AG04449 (cell line): ENCODE measurements at regions of chr3 and their contacts with region 1.

Region 1: DNA sequence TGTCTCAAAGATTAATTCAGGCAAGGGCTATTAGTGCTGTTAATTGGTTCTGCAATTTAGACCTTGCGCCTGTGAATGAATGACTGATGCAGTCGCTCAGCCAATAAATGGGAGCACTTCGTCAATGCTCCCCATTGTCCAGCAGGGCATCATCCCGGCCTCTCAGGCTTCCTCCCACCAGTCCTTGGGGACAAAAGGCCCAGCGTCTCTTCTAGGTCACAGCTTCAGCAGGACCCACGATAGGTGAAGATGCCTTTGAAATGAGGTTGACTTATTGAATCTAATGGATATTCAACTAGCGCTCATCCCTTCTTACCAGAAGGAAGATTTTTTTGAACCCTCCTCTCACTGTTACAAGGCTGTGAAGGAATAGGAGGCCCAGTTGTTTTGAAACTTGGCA is 47.7 kb upstream of the CLDN18 start:
- DNase-seq: no peak
- H3K4me3 ChIP-seq: no peak overlapping the region
- CTCF ChIP-seq: no peak

Region 2: DNA sequence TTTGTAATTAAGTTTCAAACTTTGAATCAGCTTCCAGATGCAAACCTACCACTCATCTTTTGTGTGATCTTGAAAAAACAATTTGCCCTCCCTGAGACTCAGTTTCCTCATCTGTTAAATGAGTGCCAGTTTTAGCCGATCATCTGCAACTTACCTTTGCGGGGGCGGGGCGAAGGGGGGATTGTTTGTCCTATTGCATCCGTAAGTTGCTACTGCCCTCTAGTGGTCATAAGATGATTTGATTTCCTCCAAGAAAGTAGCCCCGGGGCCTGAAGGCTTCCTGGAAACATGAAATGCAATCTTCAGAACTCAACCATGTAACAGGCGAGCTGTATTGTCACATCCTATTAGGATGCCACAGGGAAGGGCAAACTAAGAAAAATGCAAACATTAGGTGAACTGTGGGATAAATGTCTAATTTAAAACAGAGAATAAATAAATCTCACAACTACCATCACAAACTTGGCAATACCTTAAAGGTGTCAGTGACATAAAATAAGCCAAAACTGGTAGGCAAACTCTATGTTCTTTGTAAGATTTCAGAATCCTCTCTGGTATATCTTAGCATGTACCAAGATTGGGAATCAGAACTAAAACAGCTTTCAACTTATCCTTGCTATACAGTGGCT is 15.8 kb before region 1 on chr3:
- CTCF ChIA-PET with region 1: interaction called, 14 read pairs
- POLR2A ChIA-PET with region 1: no interaction called
- DNase-seq: peak; percentile 9
- H3K4me3 ChIP-seq: no peak overlapping the region
- CTCF ChIP-seq: peak; percentile 63